A673 (cell line): ENCODE measurements at regions of chr10 and their contacts with region 1.

Region 1: GRCh38 chr10:28393966-28394568 is 91.2 kb upstream of the MPP7 start:
- DNase-seq: peak; percentile 79
- H3K4me3 ChIP-seq: no peak overlapping the region
- H3K27ac ChIP-seq: no peak overlapping the region
- H3K4me1 ChIP-seq: no peaks in the 10 kb centered on the region
- H3K27me3 ChIP-seq: no peaks in the 10 kb centered on the region
- CTCF ChIP-seq: peak; percentile 97

Region 2: DNA sequence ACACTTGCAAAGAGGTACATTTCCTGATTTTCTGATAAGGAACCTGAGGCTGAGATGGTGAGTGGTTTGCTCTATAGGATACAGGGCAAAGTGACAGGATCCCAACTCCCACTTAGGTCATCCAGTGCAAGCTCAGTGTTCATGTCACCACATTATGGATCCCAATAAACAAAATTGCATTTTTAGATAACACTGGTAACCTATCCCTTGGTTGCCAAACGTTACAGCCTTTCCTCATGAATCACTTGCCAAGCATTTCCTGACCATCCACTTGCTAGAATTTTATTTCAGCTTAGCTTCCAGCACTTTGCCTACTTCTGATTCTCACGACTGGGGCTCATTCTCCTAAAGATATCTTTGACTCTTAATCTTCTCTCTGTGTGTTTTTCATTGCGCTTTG is 263.8 kb before region 1 on chr10:
- CTCF ChIA-PET with region 1: interaction called, 10 read pairs
- POLR2A ChIA-PET with region 1: no interaction called
- intact Hi-C with region 1: no loop called
- DNase-seq: peak; percentile 38
- H3K4me3 ChIP-seq: no peak overlapping the region
- H3K27ac ChIP-seq: no peak overlapping the region
- H3K4me1 ChIP-seq: no peaks in the 10 kb centered on the region
- H3K27me3 ChIP-seq: no peaks in the 10 kb centered on the region
- CTCF ChIP-seq: no peak

Region 3: GRCh38 chr10:29131952-29132820 is 738.1 kb after region 1 on chr10:
- CTCF ChIA-PET with region 1: no interaction called
- POLR2A ChIA-PET with region 1: no interaction called
- intact Hi-C with region 1: no loop called
- DNase-seq: peak; percentile 90
- H3K4me3 ChIP-seq: peak overlapping the region; percentile 4
- H3K27ac ChIP-seq: peak overlapping the region; percentile 38
- H3K4me1 ChIP-seq: peaks cover 35% of the 10 kb centered on the region
- H3K27me3 ChIP-seq: no peaks in the 10 kb centered on the region
- CTCF ChIP-seq: no peak